ENCODE measurements at regions of chr11 and their contacts with region 1.

Region 1: GRCh38 chr11:10808553-10809372 is at the start of gene EIF4G2:
- H3K4me3 ChIP-seq: peak within 1 kb of the TSS; percentile 99
- H3K27ac ChIP-seq: peak within 1 kb of the TSS; percentile 90
- H3K4me1 ChIP-seq: no peaks in the 10 kb centered on the region
- CTCF ChIP-seq: peak; percentile 13; the same call in 1 of the 2 replicates

Region 2: GRCh38 chr11:10770626-10771254 is 38.0 kb before region 1 on chr11:
- CTCF ChIA-PET with region 1: interaction called, 3 read pairs
- POLR2A ChIA-PET with region 1: interaction called, 14 read pairs
- H3K4me3 ChIP-seq: no peak overlapping the region
- H3K27ac ChIP-seq: no peak overlapping the region
- H3K4me1 ChIP-seq: no peaks in the 10 kb centered on the region
- CTCF ChIP-seq: no peak

Region 3: GRCh38 chr11:10838083-10838482 is 29.3 kb after region 1 on chr11:
- CTCF ChIA-PET with region 1: interaction called, 4 read pairs
- POLR2A ChIA-PET with region 1: interaction called, 32 read pairs
- H3K4me3 ChIP-seq: no peak overlapping the region
- H3K27ac ChIP-seq: no peak overlapping the region
- H3K4me1 ChIP-seq: no peaks in the 10 kb centered on the region
- CTCF ChIP-seq: no peak

Region 4: GRCh38 chr11:10899121-10899830 is 90.5 kb after region 1 on chr11:
- CTCF ChIA-PET with region 1: no interaction called
- POLR2A ChIA-PET with region 1: interaction called, 62 read pairs
- H3K4me3 ChIP-seq: no peak overlapping the region
- H3K27ac ChIP-seq: peak overlapping the region; percentile 78
- H3K4me1 ChIP-seq: 0 out of 2 replicates have a peak, but pooled peaks cover 5% of the 10 kb centered on the region
- CTCF ChIP-seq: no peak

Region 5: DNA sequence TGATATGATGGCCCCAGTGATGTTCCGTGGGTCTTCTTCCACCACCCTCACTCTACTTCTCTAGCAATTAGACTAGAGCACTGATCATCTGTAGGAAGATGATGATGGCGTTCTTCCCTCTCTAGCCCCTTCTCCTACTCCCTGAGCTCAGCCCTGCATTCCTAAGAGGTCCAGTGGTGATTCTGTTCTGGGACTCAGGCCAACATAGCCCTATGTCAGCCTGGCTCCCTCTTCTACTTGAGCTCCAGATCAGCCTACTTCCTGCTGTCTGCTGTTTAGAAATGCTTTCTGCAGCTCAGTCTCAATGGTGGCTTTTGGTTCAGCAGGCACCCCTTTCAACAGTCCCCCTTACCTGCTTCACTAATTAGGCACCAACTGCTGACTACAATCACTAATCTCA is 135.2 kb after region 1 on chr11:
- CTCF ChIA-PET with region 1: no interaction called
- POLR2A ChIA-PET with region 1: interaction called, 10 read pairs
- H3K4me3 ChIP-seq: no peak overlapping the region
- H3K27ac ChIP-seq: no peak overlapping the region
- H3K4me1 ChIP-seq: no peaks in the 10 kb centered on the region
- CTCF ChIP-seq: no peak

Region 6: DNA sequence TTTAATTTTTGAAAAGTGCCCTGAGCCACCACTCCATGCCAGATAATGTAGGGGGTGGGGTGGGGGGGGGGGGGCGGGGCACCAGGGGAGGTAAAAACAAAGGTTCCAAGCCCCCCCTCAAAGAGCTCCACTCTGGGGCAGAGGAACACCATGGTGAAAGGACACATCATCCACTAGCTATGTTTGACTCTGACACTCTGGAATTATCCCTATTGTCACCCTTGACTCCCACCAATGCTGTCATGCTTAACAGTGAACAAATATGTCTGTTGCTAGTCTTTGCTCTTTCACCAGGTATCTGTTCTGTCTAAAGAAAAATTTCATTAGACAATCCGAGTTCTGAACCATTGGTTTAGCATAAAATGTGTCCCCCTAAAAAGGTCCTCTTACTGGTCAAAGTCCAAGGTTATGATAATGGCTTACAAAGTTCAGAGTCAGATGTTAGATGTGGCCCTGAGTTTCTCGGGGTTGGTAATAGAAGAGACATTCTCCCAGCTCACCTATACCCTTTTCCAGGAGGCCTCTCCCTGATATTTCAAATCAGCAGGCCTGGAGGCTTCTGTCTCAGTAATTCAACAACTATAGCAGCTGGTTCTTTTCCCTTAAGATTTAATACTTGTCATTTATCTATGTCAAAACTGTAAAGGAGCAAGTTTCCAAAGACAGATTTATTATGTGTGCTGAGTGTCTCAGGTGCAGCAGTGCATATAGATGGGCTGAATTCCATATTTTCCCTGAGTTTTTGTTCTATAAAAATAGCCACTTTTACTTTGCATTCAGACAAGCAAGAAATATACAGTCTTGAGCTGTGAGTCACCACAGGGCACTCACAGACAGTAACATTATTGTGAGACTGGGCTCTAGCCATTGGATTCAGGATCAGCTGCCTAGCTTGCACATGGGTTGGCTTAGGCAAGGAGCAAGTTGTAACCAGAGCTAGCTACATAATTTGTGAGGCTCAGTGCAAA is 370.2 kb after region 1 on chr11:
- CTCF ChIA-PET with region 1: no interaction called
- POLR2A ChIA-PET with region 1: no interaction called
- H3K4me3 ChIP-seq: no peak overlapping the region
- H3K27ac ChIP-seq: no peak overlapping the region
- H3K4me1 ChIP-seq: no peaks in the 10 kb centered on the region
- CTCF ChIP-seq: no peak

Region 7: DNA sequence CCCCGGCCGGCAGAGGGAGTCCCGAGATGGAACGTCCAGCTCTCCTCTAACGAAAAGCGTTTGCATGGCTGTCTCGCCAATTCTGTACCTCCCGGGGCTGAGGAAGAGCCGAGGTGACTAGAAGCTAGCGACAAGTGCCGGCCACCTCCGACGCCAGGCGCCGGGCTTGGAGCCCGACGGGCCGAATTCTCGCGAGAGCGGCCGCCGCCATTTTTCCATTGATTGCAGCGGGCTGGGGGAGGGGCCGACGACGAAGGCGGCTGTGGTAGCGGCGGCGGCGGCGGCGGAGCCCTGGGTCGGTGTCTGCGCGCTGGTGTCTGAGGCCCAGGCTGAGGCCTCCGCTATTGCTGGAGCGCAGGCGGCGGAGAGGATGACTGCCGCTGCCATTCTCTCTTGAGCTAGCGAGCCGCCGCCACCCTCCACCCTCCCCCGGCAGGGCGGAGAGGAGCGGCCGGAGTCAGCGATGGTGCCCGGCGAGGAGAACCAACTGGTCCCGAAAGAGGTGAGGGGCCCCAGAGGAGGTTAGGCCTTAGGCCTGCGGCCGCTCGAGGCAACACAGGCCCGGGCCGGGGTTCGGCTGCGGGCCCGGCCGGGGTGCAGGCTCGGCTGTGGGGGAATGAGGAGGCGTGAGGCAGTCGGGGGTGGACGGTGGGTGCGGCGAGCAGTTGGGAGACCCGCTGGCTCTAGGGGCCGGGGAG is 1033.1 kb after region 1 on chr11 and contains the start of gene USP47:
- CTCF ChIA-PET with region 1: no interaction called
- POLR2A ChIA-PET with region 1: interaction called, 15 read pairs
- H3K4me3 ChIP-seq: peak within 1 kb of the TSS; percentile 90
- H3K27ac ChIP-seq: peak within 1 kb of the TSS; percentile 90
- H3K4me1 ChIP-seq: no peaks in the 10 kb centered on the region
- CTCF ChIP-seq: no peak; the same call in 1 of the 2 replicates

Measured in HEK293 (cell line).